ENCODE measurements at regions of chr9 and their contacts with region 1.

Region 1: GRCh38 chr9:115202960-115203751 is 85.2 kb upstream of the TNC start:
- DNase-seq: peak; percentile 92
- H3K4me3 ChIP-seq: no peak overlapping the region
- H3K27ac ChIP-seq: peak overlapping the region; percentile 77
- H3K27me3 ChIP-seq: no peaks in the 10 kb centered on the region
- CTCF ChIP-seq: no peak

Region 2: DNA sequence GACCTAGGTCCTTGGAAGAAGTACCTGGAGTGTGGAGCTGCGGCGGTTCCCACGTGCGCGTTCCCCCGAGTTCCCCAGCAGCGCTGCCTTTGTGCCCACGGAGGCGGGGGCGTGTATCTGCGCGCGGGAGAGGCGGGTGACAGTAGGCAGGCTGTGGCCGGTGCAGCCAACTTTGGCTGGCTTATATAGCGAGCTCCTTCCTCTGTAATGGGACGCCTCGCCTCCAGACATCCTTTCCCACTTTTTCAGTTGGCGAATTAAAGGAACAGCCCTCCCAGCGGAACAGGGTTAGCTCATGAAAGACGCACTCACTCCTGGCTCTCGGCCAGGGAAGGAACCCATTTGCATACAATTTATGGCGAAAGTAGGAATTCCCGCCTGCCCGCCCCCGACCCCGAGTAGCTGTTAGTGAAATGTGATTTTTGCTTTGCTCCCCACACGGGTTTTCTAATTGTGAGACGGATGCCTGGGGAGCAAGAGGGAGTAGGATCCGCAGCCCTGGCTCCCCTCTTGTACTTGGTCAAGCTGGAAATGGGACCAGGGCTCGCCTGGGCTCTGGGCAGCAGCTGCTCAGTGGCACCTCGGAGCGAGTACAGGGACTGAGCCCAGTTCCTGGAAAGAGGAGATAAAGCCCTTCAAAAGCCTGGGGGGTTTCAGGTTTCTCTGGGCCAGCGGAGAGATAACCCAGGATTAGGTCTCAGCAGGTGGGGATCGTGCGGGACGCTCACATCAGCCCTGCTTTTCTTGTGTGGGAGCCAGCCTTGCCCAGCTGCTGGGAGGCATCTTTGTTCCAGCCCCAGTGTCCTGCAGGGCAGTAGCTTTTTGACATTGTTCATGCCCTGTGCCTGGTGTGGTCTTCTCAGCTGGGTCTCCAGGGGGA is 84.9 kb before region 1 on chr9 and contains the start of gene TNC:
- CTCF ChIA-PET with region 1: no interaction called
- POLR2A ChIA-PET with region 1: interaction called, 20 read pairs
- DNase-seq: peak; percentile 79
- H3K4me3 ChIP-seq: peak within 1 kb of the TSS; percentile 77
- H3K27ac ChIP-seq: peak within 1 kb of the TSS; percentile 92
- H3K27me3 ChIP-seq: no peaks in the 10 kb centered on the region
- CTCF ChIP-seq: no peak
- polyA plus RNA-seq, gene TNC: 265 and 319 TPM in 2 replicates

Region 3: DNA sequence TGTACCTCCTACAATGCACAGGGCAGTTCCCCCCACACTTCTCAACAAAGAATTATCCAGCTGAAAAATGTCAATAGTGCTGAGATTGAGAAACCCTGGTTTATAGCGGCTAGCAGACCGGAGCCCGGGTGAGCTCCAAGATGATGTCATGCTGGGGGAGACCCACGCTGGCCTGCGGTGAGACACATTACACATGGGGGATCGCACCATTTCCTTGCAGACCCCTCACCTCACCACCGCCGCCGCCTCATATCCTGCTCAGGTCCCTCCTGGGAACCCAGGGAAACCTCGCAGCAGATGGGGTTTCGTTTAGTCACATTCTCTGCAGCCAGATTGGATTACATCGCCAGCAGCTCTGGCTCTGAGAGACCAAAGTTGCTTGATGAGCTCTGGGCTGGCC is 70.5 kb before region 1 on chr9:
- CTCF ChIA-PET with region 1: no interaction called
- POLR2A ChIA-PET with region 1: interaction called, 10 read pairs
- DNase-seq: peak; percentile 62
- H3K4me3 ChIP-seq: peak overlapping the region; percentile 38
- H3K27ac ChIP-seq: peak overlapping the region; percentile 90
- H3K27me3 ChIP-seq: no peaks in the 10 kb centered on the region
- CTCF ChIP-seq: no peak

Measured in AG04450 (cell line).